ENCODE measurements at regions of chr11 and their contacts with region 1.

Region 1: GRCh38 chr11:3341298-3341697 is 37.6 kb downstream of the ZNF195 start:
- DNase-seq: peak; percentile 66
- ATAC-seq: no peak
- H3K4me3 Mint-ChIP-seq: no peak overlapping the region
- H3K27ac Mint-ChIP-seq: no peak overlapping the region
- H3K4me1 Mint-ChIP-seq: no peaks in the 10 kb centered on the region
- H3K27me3 Mint-ChIP-seq: peaks cover 44% of the 10 kb centered on the region

Region 2: GRCh38 chr11:3160252-3161031 is 180.9 kb before region 1 on chr11:
- CTCF ChIA-PET with region 1: no interaction called
- DNase-seq: no peak
- ATAC-seq: no peak
- H3K4me3 Mint-ChIP-seq: no peak overlapping the region
- H3K27ac Mint-ChIP-seq: no peak overlapping the region
- H3K4me1 Mint-ChIP-seq: no peaks in the 10 kb centered on the region
- H3K27me3 Mint-ChIP-seq: peaks cover 24% of the 10 kb centered on the region

Region 3: GRCh38 chr11:3412837-3413236 is 71.5 kb after region 1 on chr11:
- CTCF ChIA-PET with region 1: interaction called, 30 read pairs
- DNase-seq: no peak
- ATAC-seq: no peak
- H3K4me3 Mint-ChIP-seq: no peak overlapping the region
- H3K27ac Mint-ChIP-seq: no peak overlapping the region
- H3K4me1 Mint-ChIP-seq: peaks cover 4% of the 10 kb centered on the region
- H3K27me3 Mint-ChIP-seq: no peaks in the 10 kb centered on the region

Measured in activated CD8-positive, alpha-beta memory T cell treated with anti-CD3 and anti-CD28 coated beads, Interleukin-2, amount 10 ng/mL, durations not matched to agents 7 days and 5 days (primary cell).